ENCODE measurements at regions of chr5 and their contacts with region 1.

Region 1: GRCh38 chr5:134411546-134412266 is at the start of gene CDKN2AIPNL:
- DNase-seq: peak; percentile 86
- H3K4me3 ChIP-seq: peak within 1 kb of the TSS; percentile 75 to 88 (median 84)
- H3K27ac ChIP-seq: peak within 1 kb of the TSS; percentile 40
- H3K4me1 ChIP-seq: peaks cover 15% of the 10 kb centered on the region
- H3K27me3 ChIP-seq: no peaks in the 10 kb centered on the region
- CTCF ChIP-seq: peak; percentile 71 to 86
- POLR2A ChIP-seq: peak; percentile 86
- total RNA-seq, gene CDKN2AIPNL: 35.1 and 36.5 TPM in 2 replicates

Region 2: GRCh38 chr5:134304311-134304710 is 107.4 kb before region 1 on chr5:
- CTCF ChIA-PET with region 1: no interaction called
- POLR2A ChIA-PET with region 1: no interaction called
- dilution Hi-C with region 1: no loop called
- intact Hi-C with region 1: no loop called
- DNase-seq: no peak
- H3K4me3 ChIP-seq: no peak overlapping the region
- H3K27ac ChIP-seq: no peak overlapping the region
- H3K4me1 ChIP-seq: no peaks in the 10 kb centered on the region
- H3K27me3 ChIP-seq: no peaks in the 10 kb centered on the region
- CTCF ChIP-seq: no peak
- POLR2A ChIP-seq: no peak

Region 3: DNA sequence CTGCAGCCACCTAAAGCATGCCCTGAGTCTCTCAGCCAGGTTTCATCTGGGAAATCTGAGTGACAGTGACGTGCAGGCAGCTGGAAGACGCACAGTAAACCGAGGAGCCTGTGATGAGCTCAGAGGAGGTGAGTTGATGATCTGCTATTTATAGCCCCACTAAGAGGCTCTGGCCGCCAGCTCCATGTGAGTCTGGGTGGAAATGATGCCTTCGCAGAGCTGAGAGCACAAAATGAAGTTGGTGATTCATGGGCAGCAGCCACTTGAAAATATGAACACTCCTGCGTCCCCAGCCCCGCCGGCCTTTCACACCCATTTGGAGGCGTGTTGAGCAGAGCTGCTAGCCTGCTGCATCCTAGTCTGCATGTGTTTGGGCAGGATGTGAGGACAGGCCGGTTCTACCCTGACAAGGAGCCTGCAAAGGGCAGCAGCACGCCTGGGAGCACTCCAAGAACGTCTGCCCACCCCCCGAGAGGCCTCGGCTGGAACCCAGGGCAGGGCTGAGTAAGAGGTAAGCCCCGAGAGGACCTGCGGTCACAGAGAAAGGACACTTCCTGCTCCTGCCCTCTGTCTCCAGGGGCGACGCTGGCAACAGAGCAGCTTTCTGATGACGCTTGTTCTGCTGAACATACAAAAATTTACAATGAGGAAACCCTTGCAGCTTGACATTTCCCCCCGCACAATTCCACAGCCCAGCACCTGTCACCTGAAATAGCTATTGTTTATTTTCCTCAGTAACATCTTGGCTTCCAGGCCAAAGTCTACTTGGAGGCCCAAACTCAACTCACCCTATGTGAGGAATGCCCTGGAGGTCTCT is 25.0 kb after region 1 on chr5:
- CTCF ChIA-PET with region 1: interaction called, 4 read pairs
- POLR2A ChIA-PET with region 1: no interaction called
- dilution Hi-C with region 1: no loop called
- intact Hi-C with region 1: loop called (anchors 1 kb)
- DNase-seq: peak; percentile 69
- H3K4me3 ChIP-seq: no peak overlapping the region
- H3K27ac ChIP-seq: no peak overlapping the region
- H3K4me1 ChIP-seq: peaks cover 5% of the 10 kb centered on the region
- H3K27me3 ChIP-seq: no peaks in the 10 kb centered on the region
- CTCF ChIP-seq: no peak
- POLR2A ChIP-seq: no peak

Region 4: DNA sequence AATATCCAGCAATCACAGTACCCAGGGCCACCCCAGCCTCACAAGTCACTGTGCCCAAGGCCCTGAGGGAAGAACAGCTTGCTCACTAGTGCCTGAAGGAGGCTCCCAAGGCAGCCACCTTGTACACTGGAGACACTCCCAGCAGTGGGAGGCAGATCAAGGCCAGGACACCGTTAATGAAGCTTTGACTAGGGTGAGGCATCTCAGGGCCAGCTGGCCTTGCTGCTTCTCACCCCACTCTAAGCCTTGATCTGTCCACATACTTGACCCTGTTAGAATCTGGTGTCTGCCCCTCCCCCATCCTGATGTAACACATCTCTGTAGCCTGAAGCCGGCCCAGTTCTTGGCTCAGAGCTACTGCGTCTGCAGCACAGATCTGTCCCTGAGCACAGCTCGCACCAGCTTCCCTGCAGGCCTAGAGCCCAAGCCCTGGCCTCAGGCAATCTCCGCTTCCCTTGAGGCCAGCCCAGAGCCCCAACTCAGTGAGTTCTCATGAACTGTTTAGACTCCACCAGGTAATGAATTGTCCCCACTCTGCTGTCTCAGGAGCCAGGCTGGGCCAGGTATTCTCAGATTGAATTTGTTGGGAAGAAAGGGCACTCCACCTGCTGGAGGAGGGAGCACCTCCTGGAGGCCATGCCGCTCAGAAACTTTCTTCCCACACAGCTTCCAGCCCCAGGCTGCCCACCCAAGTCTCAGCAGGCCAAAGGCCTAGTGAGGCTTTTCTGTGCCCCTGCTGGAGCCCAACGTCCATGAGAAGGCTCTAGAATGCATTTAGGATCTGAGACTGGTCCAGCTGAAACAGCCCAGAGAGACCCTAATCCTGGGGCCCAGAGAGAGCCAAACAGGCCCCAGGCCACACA is 100.3 kb after region 1 on chr5:
- CTCF ChIA-PET with region 1: interaction called, 12 read pairs
- POLR2A ChIA-PET with region 1: no interaction called
- dilution Hi-C with region 1: no loop called
- intact Hi-C with region 1: no loop called
- DNase-seq: no peak
- H3K4me3 ChIP-seq: no peak overlapping the region
- H3K27ac ChIP-seq: peak overlapping the region; percentile 42
- H3K4me1 ChIP-seq: peaks cover 15% of the 10 kb centered on the region
- H3K27me3 ChIP-seq: no peaks in the 10 kb centered on the region
- CTCF ChIP-seq: no peak
- POLR2A ChIP-seq: no peak

Region 5: DNA sequence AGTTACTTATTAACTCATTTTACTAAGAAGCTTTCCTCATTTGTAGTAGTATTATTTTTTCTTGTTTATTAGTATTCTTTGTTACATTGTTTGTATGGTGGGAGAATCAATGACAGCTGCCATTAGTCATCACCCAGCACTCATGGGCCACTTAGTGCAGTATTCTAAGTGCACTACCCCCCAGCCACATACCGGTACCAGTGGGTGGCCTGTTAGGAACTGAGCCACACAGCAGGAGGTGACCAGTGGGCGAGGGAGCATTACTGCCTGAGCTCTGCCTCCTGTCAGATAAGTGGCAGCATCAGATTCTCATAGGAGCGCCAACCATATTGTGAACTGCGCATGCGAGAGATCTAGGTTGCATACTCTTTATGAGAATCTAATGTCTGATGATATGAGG is 302.4 kb after region 1 on chr5:
- CTCF ChIA-PET with region 1: no interaction called
- POLR2A ChIA-PET with region 1: no interaction called
- dilution Hi-C with region 1: no loop called
- intact Hi-C with region 1: no loop called
- DNase-seq: no peak
- H3K4me3 ChIP-seq: no peak overlapping the region
- H3K27ac ChIP-seq: no peak overlapping the region
- H3K4me1 ChIP-seq: no peaks in the 10 kb centered on the region
- H3K27me3 ChIP-seq: no peaks in the 10 kb centered on the region
- CTCF ChIP-seq: no peak
- POLR2A ChIP-seq: no peak

Region 6: DNA sequence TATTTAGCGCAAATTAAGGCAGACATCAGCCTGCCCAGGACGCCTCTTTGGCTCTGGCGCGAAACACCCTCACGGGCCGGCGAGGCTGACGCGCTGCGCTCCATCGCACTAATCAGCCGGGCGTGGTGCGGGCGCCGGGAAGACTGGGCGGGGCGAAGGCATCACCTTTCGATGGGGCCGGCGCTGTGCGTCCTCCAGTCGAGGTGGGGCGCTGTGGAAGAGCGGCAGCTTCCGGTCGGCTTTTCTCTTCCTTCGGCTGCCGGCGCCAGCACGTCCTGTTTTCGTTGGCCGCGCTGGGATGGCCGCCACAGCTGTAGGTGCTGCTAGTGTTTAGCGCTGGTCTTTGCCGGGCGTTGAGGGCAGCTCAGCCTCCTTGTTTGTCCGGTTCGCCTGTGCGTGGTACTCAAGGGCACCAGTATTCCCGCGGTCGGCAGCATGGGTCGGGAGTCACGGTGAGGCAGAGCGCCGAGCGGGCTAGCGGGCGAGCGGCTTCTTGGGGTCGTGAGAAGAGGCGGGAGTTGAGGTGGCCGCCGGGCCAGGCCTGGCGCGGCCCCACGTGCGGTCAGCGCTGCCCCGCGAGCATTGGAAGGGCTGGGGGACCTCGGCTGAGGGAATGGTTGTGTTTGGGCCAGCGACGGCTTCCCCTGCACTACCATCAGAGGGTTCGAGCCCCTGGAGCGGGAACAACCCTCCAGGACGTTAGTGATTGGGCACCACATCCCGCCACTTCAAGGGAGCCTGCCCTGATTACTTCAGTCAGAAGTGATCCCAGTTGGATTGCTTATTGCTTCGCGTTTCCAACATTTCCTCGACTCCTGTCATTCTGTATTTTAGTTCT is 347.0 kb after region 1 on chr5 and contains the start of gene DDX46:
- CTCF ChIA-PET with region 1: no interaction called
- POLR2A ChIA-PET with region 1: no interaction called
- dilution Hi-C with region 1: no loop called
- intact Hi-C with region 1: no loop called
- DNase-seq: peak; percentile 95
- H3K4me3 ChIP-seq: peak within 1 kb of the TSS; percentile 54 to 87 (median 76)
- H3K27ac ChIP-seq: peak within 1 kb of the TSS; percentile 45
- H3K4me1 ChIP-seq: peaks cover 15% of the 10 kb centered on the region
- H3K27me3 ChIP-seq: no peaks in the 10 kb centered on the region
- CTCF ChIP-seq: peak; percentile 84 to 89
- POLR2A ChIP-seq: peak; percentile 94
- total RNA-seq, gene DDX46: 58.0 and 65.2 TPM in 2 replicates

Region 7: GRCh38 chr5:134833340-134834032 is 421.8 kb after region 1 on chr5:
- CTCF ChIA-PET with region 1: no interaction called
- POLR2A ChIA-PET with region 1: no interaction called
- dilution Hi-C with region 1: no loop called
- intact Hi-C with region 1: no loop called
- DNase-seq: no peak
- H3K4me3 ChIP-seq: no peak overlapping the region
- H3K27ac ChIP-seq: no peak overlapping the region
- H3K4me1 ChIP-seq: no peaks in the 10 kb centered on the region
- H3K27me3 ChIP-seq: no peaks in the 10 kb centered on the region
- CTCF ChIP-seq: no peak
- POLR2A ChIP-seq: no peak

Measured in endothelial cell of umbilical vein (primary cell).